ENCODE measurements at regions of chr12 and their contacts with region 1.

Region 1: DNA sequence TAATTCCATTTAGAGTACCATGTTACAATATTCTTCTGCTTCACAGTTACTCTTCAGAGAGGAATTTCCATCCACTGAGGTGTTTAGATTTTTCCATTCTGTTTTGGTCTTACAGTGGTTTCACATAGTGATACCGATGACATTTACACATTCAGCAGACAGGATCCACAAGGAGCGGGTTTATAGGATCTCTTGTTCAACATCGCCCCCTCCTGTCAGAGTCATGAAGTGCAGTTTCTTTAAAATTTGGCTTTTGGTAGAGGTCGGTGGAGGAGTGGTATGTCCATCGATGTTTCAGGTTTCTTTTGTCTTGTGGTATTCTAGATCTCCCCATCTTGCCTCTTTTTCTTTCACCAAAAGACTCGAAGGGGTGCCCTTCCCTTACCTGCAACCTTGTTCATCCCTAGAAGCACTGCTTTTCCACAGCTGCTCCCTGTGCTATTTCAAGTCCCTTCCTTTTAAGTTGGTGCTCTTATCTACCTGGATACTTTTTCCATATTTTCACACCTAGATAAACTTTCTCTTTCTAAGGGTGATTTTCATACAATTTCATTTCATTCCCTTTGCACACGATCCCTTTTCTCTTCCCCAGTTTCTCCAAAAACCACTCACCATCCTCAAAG is 181.3 kb downstream of the ITPR2 start:
- DNase-seq: no peak
- ATAC-seq: peak; percentile 65 to 70

Region 2: GRCh38 chr12:26097046-26097878 is 554.4 kb before region 1 on chr12:
- intact Hi-C with region 1: loop called (anchors 5 to 10 kb)
- DNase-seq: peak; percentile 68
- ATAC-seq: peak; percentile 96 to 98

Region 3: DNA sequence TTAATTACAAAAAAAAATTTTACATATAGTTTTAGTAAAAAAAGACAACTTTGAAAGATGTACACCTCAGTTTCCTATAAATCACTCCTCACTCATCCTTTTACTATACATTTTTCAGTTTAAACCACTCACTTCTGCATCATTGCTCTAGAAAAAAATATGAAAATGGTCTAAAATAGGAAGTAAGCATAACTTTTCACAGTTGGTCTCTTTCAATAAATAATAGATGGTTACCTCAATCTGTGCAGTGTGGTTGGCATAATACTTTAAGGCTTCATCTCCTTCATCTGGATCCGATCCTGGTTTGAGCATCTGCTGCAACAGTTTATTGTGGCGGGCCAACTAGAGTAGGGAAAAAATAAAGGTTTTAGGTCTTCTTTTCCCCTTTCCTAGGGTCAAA is 208.4 kb before region 1 on chr12:
- intact Hi-C with region 1: loop called in 1 of 2 experiments (anchors 5 kb)
- DNase-seq: no peak
- ATAC-seq: no peak

Region 4: GRCh38 chr12:27324530-27324929 is 672.9 kb after region 1 on chr12:
- intact Hi-C with region 1: no loop called
- DNase-seq: no peak
- ATAC-seq: no peak

Region 5: GRCh38 chr12:27343255-27344000 is 691.8 kb after region 1 on chr12:
- intact Hi-C with region 1: no loop called
- DNase-seq: no peak
- ATAC-seq: peak in 1 of 2 donors; percentile 47

Measured in left cardiac atrium (tissue), 4 donors.